ENCODE measurements at regions of chr22 and their contacts with region 1.

Region 1: GRCh38 chr22:33049119-33049729 is 9.0 kb downstream of the SYN3 start:
- DNase-seq: no peak
- H3K4me3 ChIP-seq: no peak overlapping the region
- CTCF ChIP-seq: peak; percentile 89

Region 2: DNA sequence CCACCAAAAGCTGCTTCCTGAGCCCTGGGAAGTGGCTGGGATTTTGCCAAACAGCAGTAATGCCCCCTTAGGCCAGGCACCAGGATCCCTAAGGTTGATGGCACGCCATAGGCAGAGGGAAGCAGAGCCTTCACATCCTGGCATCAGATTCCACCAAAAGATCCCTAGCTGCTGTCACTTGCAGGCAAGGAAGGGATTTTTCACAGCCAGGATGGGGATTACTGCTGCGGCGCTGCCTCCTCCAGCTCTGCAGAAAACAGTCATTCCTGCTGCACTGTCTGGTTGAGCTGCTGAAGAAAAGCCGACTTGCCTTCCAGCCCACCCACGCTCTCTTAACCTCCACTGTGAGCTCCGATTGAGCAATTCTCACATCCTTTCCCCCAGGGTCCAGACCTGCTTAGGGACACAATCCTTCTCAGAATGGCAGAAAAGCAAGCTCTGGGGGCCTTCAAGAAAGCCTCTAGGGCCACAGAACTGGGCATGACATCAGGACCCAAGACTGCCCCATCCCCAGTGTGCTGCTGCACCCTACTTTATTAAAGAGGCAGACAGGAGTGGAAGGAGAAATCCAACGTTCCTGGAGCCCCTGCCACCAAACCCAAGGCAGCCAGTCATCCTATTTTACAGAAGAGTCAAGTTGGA is 11.0 kb before region 1 on chr22:
- CTCF ChIA-PET with region 1: interaction called, 28 read pairs
- POLR2A ChIA-PET with region 1: no interaction called
- DNase-seq: no peak
- H3K4me3 ChIP-seq: no peak overlapping the region; the same call in 1 of the 2 replicates
- CTCF ChIP-seq: no peak

Region 3: GRCh38 chr22:33063611-33064010 is 14.4 kb after region 1 on chr22:
- CTCF ChIA-PET with region 1: interaction called, 12 read pairs
- POLR2A ChIA-PET with region 1: no interaction called
- DNase-seq: no peak
- H3K4me3 ChIP-seq: no peak overlapping the region
- CTCF ChIP-seq: no peak

Measured in AG04449 (cell line).